Right cardiac atrium (tissue), 5 donors: ENCODE measurements at regions of chr2 and their contacts with region 1.

Region 1: DNA sequence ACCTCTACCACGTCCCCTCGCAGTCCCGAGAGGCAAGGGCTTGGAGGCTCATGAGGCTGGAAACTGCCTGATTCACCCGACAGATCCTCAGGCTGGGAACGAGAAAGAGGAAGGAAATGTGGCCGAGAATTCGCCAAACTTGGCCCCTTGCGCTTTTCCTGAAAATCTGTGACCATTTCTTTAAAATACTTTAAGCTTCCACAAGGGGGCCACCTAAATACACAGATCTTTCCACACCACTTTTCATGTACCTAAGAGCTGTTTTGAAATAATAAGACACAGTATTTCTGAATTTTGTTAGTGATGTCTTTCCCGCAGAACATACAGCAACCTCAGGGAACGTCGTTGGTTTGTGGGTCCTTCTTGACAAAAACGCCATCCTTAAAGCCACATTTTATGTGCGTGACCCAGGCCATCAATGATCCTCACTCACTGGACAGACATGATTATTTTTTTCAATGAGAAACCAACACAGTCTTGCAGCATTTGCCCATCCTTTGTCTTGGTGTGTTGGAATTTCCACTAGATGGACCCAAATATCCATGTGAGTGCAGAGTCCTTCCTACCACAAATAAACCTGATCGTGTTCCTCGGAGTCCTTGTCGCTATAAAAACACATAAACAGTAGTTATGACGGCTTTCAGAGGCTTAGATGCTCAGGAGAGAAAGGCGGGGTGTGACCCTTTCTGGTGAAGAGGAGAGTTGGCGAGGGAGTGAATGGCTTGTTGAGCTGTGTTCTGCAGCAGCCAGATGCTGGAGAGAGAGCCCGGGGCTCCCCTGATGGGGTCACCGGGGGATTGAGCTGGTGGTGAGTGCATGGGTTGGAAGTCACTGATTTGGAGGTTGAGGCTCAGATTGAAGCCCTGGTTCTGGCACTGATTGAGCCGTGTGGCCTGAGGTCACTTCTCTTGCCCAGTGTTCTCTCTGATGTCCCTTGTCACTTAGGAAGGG is 25.0 kb downstream of the DCDC2C start:
- DNase-seq: peak; percentile 28 to 54 (median 51)
- ATAC-seq: peak; percentile 52 to 67
- H3K4me3 ChIP-seq: no peak overlapping the region
- H3K27ac ChIP-seq: no peak overlapping the region
- H3K4me1 ChIP-seq: no peaks in the 10 kb centered on the region
- H3K27me3 ChIP-seq: no peaks in the 10 kb centered on the region

Region 2: DNA sequence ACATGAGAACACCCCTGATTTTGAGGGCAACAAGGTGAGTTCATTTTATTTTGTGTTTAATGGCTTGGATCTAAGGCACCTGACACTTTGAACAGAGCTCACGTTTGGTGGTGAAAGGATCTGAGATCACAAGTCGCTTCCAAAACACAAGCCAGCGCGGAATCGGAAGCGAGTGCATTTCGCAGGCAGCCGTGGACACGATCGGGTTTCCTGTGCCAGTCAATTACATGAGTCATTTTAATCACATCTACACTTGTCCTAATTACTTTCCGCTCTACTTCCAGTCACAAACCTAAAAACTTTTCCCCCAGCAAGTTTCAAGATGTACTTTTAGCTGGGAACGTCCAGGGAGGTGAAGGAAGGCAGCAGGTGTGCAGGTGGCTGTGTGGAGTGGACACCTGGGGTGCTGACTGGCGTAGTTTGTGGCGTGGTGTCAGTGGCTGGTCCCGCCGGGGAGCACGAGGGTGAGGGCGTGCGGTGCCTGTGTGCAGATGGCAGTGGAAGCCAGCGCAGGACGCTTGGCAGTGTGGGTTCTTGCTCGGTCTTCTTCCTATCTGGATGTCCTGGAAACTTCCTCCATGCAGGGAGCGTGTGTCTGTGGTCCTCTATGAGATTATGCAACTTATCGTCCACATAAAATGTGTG is 50.6 kb after region 1 on chr2:
- intact Hi-C with region 1: loop called in 1 of 4 experiments (anchors 5 kb)
- DNase-seq: no peak
- ATAC-seq: no peak
- H3K4me3 ChIP-seq: no peak overlapping the region
- H3K27ac ChIP-seq: no peak overlapping the region
- H3K4me1 ChIP-seq: no peaks in the 10 kb centered on the region
- H3K27me3 ChIP-seq: no peaks in the 10 kb centered on the region